Ovary (tissue), 10 donors: ENCODE measurements at regions of chr15 and their contacts with region 1.

Region 1: GRCh38 chr15:27648359-27648758 is 450.8 kb downstream of the OCA2 start:
- DNase-seq: no peak
- H3K4me3 ChIP-seq: no peak overlapping the region
- H3K27ac ChIP-seq: no peak overlapping the region
- H3K4me1 ChIP-seq: no peaks in the 10 kb centered on the region
- H3K27me3 ChIP-seq: no peaks in the 10 kb centered on the region
- CTCF ChIP-seq: no peak
- EP300 ChIP-seq: no peak
- POLR2A ChIP-seq: no peak

Region 2: GRCh38 chr15:27705056-27705455 is 56.7 kb after region 1 on chr15:
- intact Hi-C with region 1: loop called in 1 of 4 experiments (anchors 10 kb)
- DNase-seq: no peak
- H3K4me3 ChIP-seq: no peak overlapping the region
- H3K27ac ChIP-seq: no peak overlapping the region
- H3K4me1 ChIP-seq: no peaks in the 10 kb centered on the region
- H3K27me3 ChIP-seq: no peaks in the 10 kb centered on the region
- CTCF ChIP-seq: no peak
- EP300 ChIP-seq: no peak
- POLR2A ChIP-seq: no peak